Ascending aorta (tissue), 2 donors: ENCODE measurements at regions of chr13 and their contacts with region 1.

Region 1: DNA sequence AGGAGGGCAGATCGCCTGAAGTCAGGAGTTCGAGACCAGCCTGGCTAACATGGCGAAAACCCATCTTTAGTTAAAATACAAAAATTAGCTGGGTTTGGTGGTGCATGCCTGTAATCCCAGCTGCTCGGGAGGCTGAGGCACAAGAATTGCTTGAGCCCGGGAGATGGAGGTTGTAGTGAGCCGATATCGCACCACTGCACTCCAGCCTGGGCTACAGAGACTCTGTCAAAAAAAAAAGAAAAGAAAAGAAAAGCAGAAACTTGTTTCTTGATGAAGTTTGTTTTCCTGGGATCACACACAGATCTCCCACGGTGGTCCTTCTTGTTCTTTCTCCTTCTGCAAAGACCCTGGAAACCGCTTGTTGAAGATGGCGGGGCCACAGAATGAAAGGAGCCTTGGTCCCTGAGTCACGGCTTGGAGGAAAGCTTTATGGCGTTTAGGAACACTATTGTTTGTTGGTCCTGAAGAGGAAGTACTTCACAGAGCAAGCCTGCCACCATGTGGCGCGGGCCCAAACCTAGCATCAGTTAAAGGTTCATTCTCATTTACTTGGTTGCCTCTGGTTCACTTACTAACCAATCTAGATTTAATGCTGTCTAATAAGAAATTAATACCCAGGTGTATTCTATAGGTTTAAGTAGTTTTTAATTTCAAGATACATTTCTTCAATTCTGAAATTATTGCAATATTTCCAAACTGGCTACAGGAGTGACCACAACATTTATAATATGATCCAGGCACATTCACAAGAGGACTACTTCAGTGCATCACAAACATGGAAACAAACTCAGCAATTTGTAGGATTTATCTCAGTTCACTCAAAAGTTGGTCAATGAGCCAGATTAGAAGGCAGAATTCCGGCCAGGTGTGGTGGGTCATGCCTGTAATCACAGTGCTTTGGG is 21.3 kb upstream of the ARL11 start:
- DNase-seq: peak; percentile 53 to 94
- H3K4me3 ChIP-seq: peak overlapping the region; percentile 11 to 57
- H3K27ac ChIP-seq: no peak overlapping the region
- H3K4me1 ChIP-seq: no peaks in the 10 kb centered on the region
- H3K27me3 ChIP-seq: no peaks in the 10 kb centered on the region
- CTCF ChIP-seq: peak; percentile 53 to 78 (median 71)

Region 2: DNA sequence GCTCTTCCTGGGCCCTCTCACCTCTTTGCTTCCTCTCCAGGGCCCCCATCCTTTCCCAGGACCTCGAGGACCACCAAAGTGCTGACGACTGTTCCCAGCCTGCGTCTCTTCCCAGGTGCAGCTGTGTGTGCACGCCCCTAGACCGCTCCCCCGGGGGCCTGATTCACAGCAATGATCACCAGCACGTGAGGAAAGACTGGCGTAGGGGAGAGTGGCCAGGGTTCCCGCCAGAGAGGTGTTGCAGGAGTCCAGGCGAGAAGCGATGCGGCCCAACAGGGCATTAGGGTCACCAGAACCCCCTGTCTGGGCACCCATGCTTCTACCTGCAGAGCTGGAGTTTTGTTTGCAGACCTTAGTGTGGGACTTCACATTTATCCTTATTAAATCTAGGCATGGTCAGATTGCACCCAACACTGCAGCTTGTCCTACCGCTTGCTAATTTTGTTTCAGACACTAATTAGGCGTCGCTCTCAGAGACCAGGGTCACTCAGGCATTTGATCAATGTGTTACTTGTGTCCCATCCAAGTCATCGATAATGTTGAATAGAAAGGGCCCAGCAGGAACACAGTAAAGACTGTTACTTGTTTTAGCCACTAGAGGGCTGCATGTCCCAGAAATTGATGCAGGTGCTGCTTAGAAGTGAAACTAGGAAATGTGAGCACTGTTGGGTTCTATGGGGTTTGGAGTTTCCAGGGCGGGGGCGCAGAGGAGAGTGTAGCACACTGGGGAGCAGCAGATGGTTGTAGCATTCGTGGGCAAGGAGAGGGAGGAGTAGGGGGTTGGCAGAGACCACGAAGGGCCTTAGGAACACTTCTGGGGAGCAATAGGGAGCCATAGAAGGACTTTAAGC is 306.0 kb before region 1 on chr13:
- intact Hi-C with region 1: loop called (anchors 2 kb)
- DNase-seq: peak in 1 of 2 donors; percentile 73
- H3K4me3 ChIP-seq: peak overlapping the region; percentile 42 to 49
- H3K27ac ChIP-seq: peak overlapping the region in 1 of 2 donors; percentile 35
- H3K4me1 ChIP-seq: peaks cover 0 to 6% of the 10 kb centered on the region in 2 donors
- H3K27me3 ChIP-seq: no peaks in the 10 kb centered on the region
- CTCF ChIP-seq: peak; percentile 81 to 91 (median 85)

Region 3: GRCh38 chr13:49560270-49561050 is 46.5 kb before region 1 on chr13:
- intact Hi-C with region 1: loop called (anchors 2 kb)
- DNase-seq: no peak
- H3K4me3 ChIP-seq: no peak overlapping the region
- H3K27ac ChIP-seq: peak overlapping the region in 1 of 2 donors; percentile 11
- H3K4me1 ChIP-seq: peaks cover 0 to 7% of the 10 kb centered on the region in 2 donors
- H3K27me3 ChIP-seq: no peaks in the 10 kb centered on the region
- CTCF ChIP-seq: peak in 2 of 3 experiments; percentile 16 to 30

Region 4: DNA sequence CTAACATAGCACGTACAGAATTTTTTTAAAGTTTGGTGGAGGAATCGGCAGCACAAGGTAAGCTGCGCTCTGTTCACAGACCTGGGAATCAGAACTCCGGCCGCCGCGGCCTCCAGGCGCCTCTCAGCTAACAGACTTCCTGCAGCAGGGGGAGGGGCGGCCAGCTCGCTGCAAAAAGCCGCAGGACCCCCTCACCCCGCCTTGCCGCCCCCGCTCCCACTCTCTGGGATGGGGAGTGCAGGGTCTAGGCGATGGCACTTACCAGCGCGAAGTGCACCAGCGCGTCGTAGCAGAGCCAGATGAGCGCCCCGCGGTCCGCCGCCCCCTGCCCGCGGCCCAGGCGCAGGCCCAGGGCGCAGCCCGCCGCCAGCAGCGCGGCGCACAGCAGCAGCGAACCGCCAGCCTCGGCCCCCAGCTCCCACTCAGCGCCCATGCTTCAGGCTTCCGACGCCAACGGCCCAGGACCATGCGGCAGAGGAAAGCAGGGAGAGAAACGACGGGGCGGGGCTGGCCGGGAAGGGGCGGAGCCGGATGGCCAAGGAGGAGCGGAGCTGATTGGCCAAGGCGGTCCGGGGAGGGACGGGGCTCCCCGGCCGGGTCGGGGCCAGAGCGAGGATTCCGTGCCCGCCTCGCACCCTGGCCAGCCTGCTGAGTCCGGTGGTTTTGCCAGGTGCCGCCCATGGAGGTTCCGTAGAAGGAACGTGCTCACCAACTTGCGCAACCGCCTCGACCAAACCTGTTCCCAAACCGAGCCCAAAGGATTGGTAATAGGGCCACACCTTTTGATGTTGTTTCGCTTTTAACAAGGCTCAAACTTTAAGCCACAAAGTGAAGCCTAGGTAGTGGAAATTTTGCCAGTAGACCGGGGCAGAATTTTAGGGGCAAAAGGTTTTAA is 84.2 kb after region 1 on chr13 and contains the start of gene EBPL:
- intact Hi-C with region 1: no loop called
- DNase-seq: peak; percentile 72 to 95
- H3K4me3 ChIP-seq: peak within 1 kb of the TSS; percentile 84 to 93
- H3K27ac ChIP-seq: peak within 1 kb of the TSS; percentile 66 to 88
- H3K4me1 ChIP-seq: peaks cover 0 to 3% of the 10 kb centered on the region in 2 donors
- H3K27me3 ChIP-seq: no peaks in the 10 kb centered on the region
- CTCF ChIP-seq: no peak
- total RNA-seq, gene EBPL: 18.3 TPM

Region 5: GRCh38 chr13:50222569-50223332 is 615.8 kb after region 1 on chr13:
- intact Hi-C with region 1: no loop called
- DNase-seq: peak; percentile 36 to 80
- H3K4me3 ChIP-seq: peak overlapping the region in 1 of 2 donors; percentile 56
- H3K27ac ChIP-seq: peak overlapping the region in 1 of 2 donors; percentile 49
- H3K4me1 ChIP-seq: no peaks in the 10 kb centered on the region
- H3K27me3 ChIP-seq: no peaks in the 10 kb centered on the region
- CTCF ChIP-seq: no peak